Caco-2 (cell line): ENCODE measurements at regions of chr4 and their contacts with region 1.

Region 1: GRCh38 chr4:37528166-37528885 is 157.8 kb downstream of the RELL1 start:
- DNase-seq: peak; percentile 41 to 51
- H3K4me3 ChIP-seq: no peak overlapping the region
- H3K4me3 Mint-ChIP-seq: no peak overlapping the region
- H3K27ac Mint-ChIP-seq: no peak overlapping the region
- H3K4me1 ChIP-seq: peaks cover 14% of the 10 kb centered on the region; the same call in 1 of the 2 replicates
- H3K4me1 Mint-ChIP-seq: no peaks in the 10 kb centered on the region
- H3K27me3 ChIP-seq: no peaks in the 10 kb centered on the region
- H3K27me3 Mint-ChIP-seq: no peaks in the 10 kb centered on the region
- CTCF ChIP-seq: no peak

Region 2: GRCh38 chr4:37389967-37390580 is 138.3 kb before region 1 on chr4:
- CTCF ChIA-PET with region 1: no interaction called
- POLR2A ChIA-PET with region 1: no interaction called
- intact Hi-C with region 1: loop called (anchors 1 kb)
- DNase-seq: peak in 1 of 2 experiments; percentile 61
- H3K4me3 ChIP-seq: no peak overlapping the region
- H3K4me3 Mint-ChIP-seq: no peak overlapping the region
- H3K27ac Mint-ChIP-seq: no peak overlapping the region
- H3K4me1 ChIP-seq: peaks cover 12% of the 10 kb centered on the region; the same call in 1 of the 2 replicates
- H3K4me1 Mint-ChIP-seq: peaks cover 11% of the 10 kb centered on the region
- H3K27me3 ChIP-seq: no peaks in the 10 kb centered on the region
- H3K27me3 Mint-ChIP-seq: peaks cover 3% of the 10 kb centered on the region
- CTCF ChIP-seq: peak; percentile 57 to 70

Region 3: DNA sequence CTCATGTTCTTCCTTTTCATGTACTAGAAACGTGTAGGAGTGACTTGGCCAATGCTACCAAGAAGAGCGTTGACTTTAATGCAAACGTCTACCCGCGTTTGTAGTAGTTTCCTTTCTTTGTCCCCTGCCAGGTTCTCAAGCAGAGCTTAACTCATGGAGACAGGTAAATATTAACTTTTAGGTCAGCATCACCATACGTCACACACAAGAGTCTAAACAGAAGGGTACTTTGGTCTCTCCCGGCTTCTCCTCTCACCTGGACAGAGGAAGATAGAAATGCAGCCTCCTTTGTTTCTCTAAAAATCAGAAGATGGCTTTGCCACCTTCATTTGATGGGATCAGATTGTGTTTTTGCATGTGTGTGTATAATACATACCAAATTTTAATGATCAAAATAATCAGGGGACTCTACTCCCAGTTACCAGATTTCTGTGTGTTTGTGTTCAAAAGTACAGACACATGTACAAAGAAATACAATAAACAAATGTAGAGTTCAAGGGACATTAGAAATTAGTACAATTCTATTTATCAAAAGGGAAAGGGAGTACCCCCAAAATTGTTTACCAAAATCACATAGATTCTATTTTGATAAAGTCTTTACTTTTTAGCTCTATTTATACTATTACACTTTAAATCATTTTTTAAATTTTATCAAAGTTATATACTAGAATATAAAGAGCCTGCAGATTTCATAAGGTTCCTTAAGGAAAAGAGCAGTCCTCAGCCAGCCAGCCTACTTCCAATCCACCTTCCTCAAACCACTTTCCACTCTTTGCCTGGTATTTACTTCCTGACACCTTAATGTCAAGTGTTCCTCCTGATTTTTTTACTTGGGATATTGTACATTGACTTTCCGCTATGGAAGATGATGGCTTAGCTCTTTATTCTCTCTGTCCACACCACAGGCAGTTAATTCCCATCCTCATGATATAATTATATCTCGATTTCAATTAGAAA is 37.7 kb before region 1 on chr4:
- CTCF ChIA-PET with region 1: no interaction called
- POLR2A ChIA-PET with region 1: no interaction called
- intact Hi-C with region 1: loop called (anchors 5 kb)
- DNase-seq: peak in 1 of 2 experiments; percentile 57
- H3K4me3 ChIP-seq: peak overlapping the region; percentile 22
- H3K4me3 Mint-ChIP-seq: peak overlapping the region; percentile 70
- H3K27ac Mint-ChIP-seq: peak overlapping the region; percentile 85
- H3K4me1 ChIP-seq: peaks cover 24% of the 10 kb centered on the region
- H3K4me1 Mint-ChIP-seq: peaks cover 26% of the 10 kb centered on the region
- H3K27me3 ChIP-seq: no peaks in the 10 kb centered on the region
- H3K27me3 Mint-ChIP-seq: no peaks in the 10 kb centered on the region
- CTCF ChIP-seq: no peak

Region 4: DNA sequence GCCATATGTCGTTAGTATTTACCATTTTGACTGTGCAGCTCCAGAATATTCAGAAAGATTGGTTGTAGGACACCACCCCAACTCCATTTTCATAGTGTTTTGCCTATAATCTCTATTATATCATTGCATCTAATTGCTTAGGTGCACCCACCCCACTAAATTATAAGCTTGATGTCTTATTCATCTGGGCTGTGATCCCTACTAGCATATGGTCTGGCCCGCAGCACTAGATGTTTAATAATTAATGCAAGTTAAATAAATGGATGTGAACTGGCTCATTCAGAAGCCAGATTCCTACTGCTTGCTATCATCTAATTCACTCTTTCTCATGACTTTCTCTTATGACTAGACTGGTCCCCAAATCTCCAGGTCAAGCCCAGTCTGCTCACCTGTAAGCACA is 14.4 kb after region 1 on chr4:
- CTCF ChIA-PET with region 1: no interaction called
- POLR2A ChIA-PET with region 1: no interaction called
- intact Hi-C with region 1: loop called (anchors 1 kb)
- DNase-seq: no peak
- H3K4me3 ChIP-seq: no peak overlapping the region
- H3K4me3 Mint-ChIP-seq: peak overlapping the region; percentile 3
- H3K27ac Mint-ChIP-seq: peak overlapping the region; percentile 13
- H3K4me1 ChIP-seq: peaks cover 60% of the 10 kb centered on the region
- H3K4me1 Mint-ChIP-seq: peaks cover 33% of the 10 kb centered on the region
- H3K27me3 ChIP-seq: no peaks in the 10 kb centered on the region
- H3K27me3 Mint-ChIP-seq: no peaks in the 10 kb centered on the region
- CTCF ChIP-seq: no peak

Region 5: DNA sequence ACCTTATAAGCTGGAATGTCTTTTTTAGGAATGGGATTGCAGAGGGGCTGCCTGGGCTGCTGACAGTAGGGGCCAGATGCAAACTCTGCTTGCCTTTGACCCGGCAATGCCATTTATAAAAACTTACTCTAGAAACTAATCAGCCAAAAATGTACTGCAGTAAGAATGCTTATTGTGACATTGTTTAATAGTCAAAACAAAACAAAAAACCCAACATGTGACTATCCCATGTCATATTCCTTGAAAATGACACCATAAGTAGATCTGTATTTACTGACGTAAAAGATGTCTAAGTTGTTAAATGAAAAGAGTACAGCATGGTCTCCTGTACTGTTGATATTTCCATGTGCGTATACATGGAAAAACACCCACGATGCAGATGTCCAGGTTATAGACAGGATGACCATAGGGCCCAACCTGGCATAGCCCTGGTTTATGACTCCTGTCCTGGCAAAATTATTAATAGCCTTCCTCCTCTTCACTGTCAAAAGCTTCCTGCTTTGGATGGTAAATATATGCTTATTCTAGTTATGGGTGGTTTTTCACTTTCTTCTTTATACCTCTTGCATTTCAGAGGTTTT is 570.8 kb after region 1 on chr4:
- CTCF ChIA-PET with region 1: interaction called, 12 read pairs
- POLR2A ChIA-PET with region 1: no interaction called
- intact Hi-C with region 1: no loop called
- DNase-seq: no peak
- H3K4me3 ChIP-seq: no peak overlapping the region
- H3K4me3 Mint-ChIP-seq: no peak overlapping the region
- H3K27ac Mint-ChIP-seq: no peak overlapping the region
- H3K4me1 ChIP-seq: no peaks in the 10 kb centered on the region
- H3K4me1 Mint-ChIP-seq: no peaks in the 10 kb centered on the region
- H3K27me3 ChIP-seq: no peaks in the 10 kb centered on the region
- H3K27me3 Mint-ChIP-seq: no peaks in the 10 kb centered on the region
- CTCF ChIP-seq: no peak